ENCODE measurements at regions of chr3 and their contacts with region 1.

Region 1: GRCh38 chr3:42804106-42804830 is at the start of gene HIGD1A:
- DNase-seq: peak; percentile 99 to 100 (median 100)
- ATAC-seq: peak; percentile 98
- H3K4me3 ChIP-seq: peak within 1 kb of the TSS; percentile 75
- H3K27ac ChIP-seq: peak within 1 kb of the TSS; percentile 83
- H3K4me1 ChIP-seq: peaks cover 20 to 26% of the 10 kb centered on the region in 2 experiments; a peak in 4 of 5 replicates
- H3K27me3 ChIP-seq: no peaks in the 10 kb centered on the region
- CTCF ChIP-seq: no peak
- EP300 ChIP-seq: no peak
- POLR2A ChIP-seq: peak; percentile 96
- RAD21 ChIP-seq: 0 out of 4 replicates have a peak, but pooled peaks of 1 of the 2 experiments have one; percentile 2
- polyA plus RNA-seq, gene HIGD1A: 1,116 to 1,185 TPM

Region 2: GRCh38 chr3:42790714-42791229 is 13.5 kb before region 1 on chr3:
- CTCF ChIA-PET with region 1: no interaction called
- POLR2A ChIA-PET with region 1: interaction called, 11 read pairs
- in situ Hi-C with region 1: no loop called
- intact Hi-C with region 1: no loop called
- DNase-seq: no peak
- ATAC-seq: no peak
- H3K4me3 ChIP-seq: no peak overlapping the region
- H3K27ac ChIP-seq: no peak overlapping the region
- H3K4me1 ChIP-seq: peaks cover 0 to 5% of the 10 kb centered on the region in 2 experiments; a peak in 2 of 5 replicates
- H3K27me3 ChIP-seq: no peaks in the 10 kb centered on the region
- CTCF ChIP-seq: no peak
- EP300 ChIP-seq: no peak
- POLR2A ChIP-seq: no peak
- RAD21 ChIP-seq: no peak

Region 3: DNA sequence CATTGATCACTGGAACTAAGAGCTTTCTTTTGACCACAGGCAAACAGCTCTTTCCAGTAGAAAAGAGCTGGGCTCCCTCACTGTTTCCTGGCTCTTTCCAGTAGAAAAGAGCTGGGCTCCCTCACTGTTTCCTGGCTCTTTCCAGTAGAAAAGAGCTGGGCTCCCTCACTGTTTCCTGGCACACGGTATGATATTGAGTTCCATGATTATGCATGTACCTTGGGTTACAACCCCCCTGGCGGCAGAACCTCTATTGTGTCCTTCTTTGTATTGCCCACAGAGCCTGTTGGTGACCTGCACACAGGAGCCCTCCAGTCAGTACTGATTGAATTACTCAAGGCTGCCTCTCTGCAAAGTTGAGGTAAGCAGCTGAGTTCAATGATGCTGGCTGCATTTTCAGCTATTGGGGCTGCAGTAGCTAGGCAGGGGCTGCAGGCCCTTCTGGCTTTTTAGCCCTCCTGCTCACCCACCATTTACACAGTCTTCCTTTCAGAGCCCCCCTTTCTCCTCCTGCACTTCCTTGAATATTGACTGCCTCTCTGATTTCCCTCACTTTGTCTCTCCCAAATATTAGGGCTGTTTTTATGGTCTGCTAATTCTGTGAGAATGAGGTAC is 15.2 kb after region 1 on chr3:
- CTCF ChIA-PET with region 1: no interaction called
- POLR2A ChIA-PET with region 1: interaction called, 19 read pairs
- in situ Hi-C with region 1: no loop called
- intact Hi-C with region 1: no loop called
- DNase-seq: peak in 2 of 4 experiments; percentile 43 to 54
- ATAC-seq: peak; percentile 81
- H3K4me3 ChIP-seq: no peak overlapping the region
- H3K27ac ChIP-seq: no peak overlapping the region
- H3K4me1 ChIP-seq: peaks cover 3 to 11% of the 10 kb centered on the region in 2 experiments; a peak in 3 of 5 replicates
- H3K27me3 ChIP-seq: 0 out of 5 replicates have a peak, but pooled peaks cover 0 to 4% of the 10 kb centered on the region in 2 experiments
- CTCF ChIP-seq: peak; percentile 41 to 45 (median 43); a peak in 4 of 6 replicates
- EP300 ChIP-seq: no peak
- POLR2A ChIP-seq: no peak
- RAD21 ChIP-seq: peak in 1 of 2 experiments; percentile 14; a peak in 1 of 4 replicates

Region 4: GRCh38 chr3:43923104-43923882 is 1119.0 kb after region 1 on chr3:
- CTCF ChIA-PET with region 1: no interaction called
- POLR2A ChIA-PET with region 1: no interaction called
- in situ Hi-C with region 1: no loop called
- intact Hi-C with region 1: no loop called
- DNase-seq: no peak
- ATAC-seq: no peak
- H3K4me3 ChIP-seq: no peak overlapping the region
- H3K27ac ChIP-seq: no peak overlapping the region
- H3K4me1 ChIP-seq: no peaks in the 10 kb centered on the region
- H3K27me3 ChIP-seq: peaks cover 3 to 29% of the 10 kb centered on the region in 2 experiments; a peak in 4 of 5 replicates
- CTCF ChIP-seq: no peak
- EP300 ChIP-seq: no peak
- POLR2A ChIP-seq: no peak
- RAD21 ChIP-seq: no peak

Measured in K562 (cell line).